H1 (cell line): ENCODE measurements at regions of chr3 and their contacts with region 1.

Region 1: GRCh38 chr3:126522363-126522788 is 1.6 kb upstream of the CHST13 start:
- DNase-seq: peak in 1 of 2 experiments; percentile 87
- H3K4me3 ChIP-seq: no peak overlapping the region
- H3K27ac ChIP-seq: no peak overlapping the region
- H3K4me1 ChIP-seq: peaks cover 0 to 15% (median 10%) of the 10 kb centered on the region in 4 experiments; a peak in 6 of 7 replicates
- H3K27me3 ChIP-seq: peaks cover 0 to 16% (median 11%) of the 10 kb centered on the region in 4 experiments; a peak in 5 of 7 replicates
- CTCF ChIP-seq: peak in 2 of 3 experiments; percentile 83 to 87; a peak in 3 of 4 replicates
- EP300 ChIP-seq: no peak
- POLR2A ChIP-seq: no peak
- RAD21 ChIP-seq: peak; percentile 79 to 86

Region 2: GRCh38 chr3:126509597-126510307 is 12.6 kb before region 1 on chr3:
- CTCF ChIA-PET with region 1: interaction called, 35 read pairs
- POLR2A ChIA-PET with region 1: no interaction called
- DNase-seq: no peak
- H3K4me3 ChIP-seq: no peak overlapping the region
- H3K27ac ChIP-seq: no peak overlapping the region
- H3K4me1 ChIP-seq: no peaks in the 10 kb centered on the region
- H3K27me3 ChIP-seq: no peaks in the 10 kb centered on the region
- CTCF ChIP-seq: no peak
- EP300 ChIP-seq: no peak
- POLR2A ChIP-seq: no peak
- RAD21 ChIP-seq: no peak

Region 3: GRCh38 chr3:126537730-126538281 is 15.4 kb after region 1 on chr3:
- CTCF ChIA-PET with region 1: interaction called, 11 read pairs
- POLR2A ChIA-PET with region 1: interaction called, 3 read pairs
- DNase-seq: no peak
- H3K4me3 ChIP-seq: no peak overlapping the region
- H3K27ac ChIP-seq: no peak overlapping the region
- H3K4me1 ChIP-seq: no peaks in the 10 kb centered on the region
- H3K27me3 ChIP-seq: peaks cover 0 to 5% (median 2%) of the 10 kb centered on the region in 4 experiments; a peak in 1 of 7 replicates
- CTCF ChIP-seq: no peak
- EP300 ChIP-seq: no peak
- POLR2A ChIP-seq: no peak
- RAD21 ChIP-seq: no peak

Region 4: DNA sequence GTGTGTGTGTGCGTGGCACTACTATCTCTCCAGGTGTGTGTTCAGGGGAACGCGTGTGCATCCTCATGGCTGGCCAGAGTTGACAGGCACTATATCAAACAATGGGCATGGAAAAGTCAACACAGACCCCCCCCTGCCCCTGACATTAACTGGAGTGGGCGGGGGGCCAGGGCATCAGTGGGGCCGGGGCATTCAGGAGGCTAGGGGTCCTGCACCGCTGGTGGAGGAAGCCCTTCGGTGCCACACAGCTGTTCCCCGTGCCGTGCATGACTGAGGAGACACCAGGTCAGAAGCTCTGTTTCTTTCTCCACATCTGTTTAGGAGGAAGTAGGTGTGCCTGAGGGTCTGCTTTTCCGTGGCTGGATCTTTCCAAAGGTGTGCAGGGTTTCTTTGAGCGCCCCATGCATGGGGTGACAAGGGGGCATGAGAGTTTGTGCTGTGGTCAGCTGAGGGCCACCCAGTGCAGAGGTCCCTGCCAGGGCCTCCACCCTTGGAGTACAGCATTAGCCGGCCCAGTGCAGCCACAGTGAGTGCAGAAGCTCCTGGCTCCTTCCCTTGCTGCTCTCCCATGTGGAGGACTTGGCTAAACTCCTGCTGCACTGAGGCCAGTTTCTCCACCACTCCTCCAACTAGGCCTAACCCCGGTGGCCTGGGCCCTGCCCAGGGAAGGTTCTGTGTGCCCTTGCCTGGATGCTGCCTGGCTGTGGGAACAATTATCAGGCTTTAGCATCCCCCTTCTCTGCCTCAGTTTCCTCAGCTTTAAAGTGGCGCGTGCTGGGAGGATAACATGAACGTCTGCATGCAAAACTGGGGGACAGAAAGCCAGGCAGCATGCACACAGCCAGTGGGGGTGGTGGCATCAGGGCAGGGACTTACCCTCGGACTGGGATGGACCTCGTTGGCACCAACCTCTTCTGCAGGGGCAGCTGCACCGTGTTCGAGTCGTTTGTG is 29.0 kb after region 1 on chr3:
- CTCF ChIA-PET with region 1: interaction called, 12 read pairs
- POLR2A ChIA-PET with region 1: no interaction called
- DNase-seq: no peak
- H3K4me3 ChIP-seq: no peak overlapping the region
- H3K27ac ChIP-seq: no peak overlapping the region
- H3K4me1 ChIP-seq: peaks cover 0 to 20% (median 10%) of the 10 kb centered on the region in 4 experiments; a peak in 6 of 7 replicates
- H3K27me3 ChIP-seq: no peaks in the 10 kb centered on the region
- CTCF ChIP-seq: no peak
- EP300 ChIP-seq: no peak
- POLR2A ChIP-seq: no peak
- RAD21 ChIP-seq: no peak